Aorta (tissue), 5 donors: ENCODE measurements at regions of chr15 and their contacts with region 1.

Region 1: DNA sequence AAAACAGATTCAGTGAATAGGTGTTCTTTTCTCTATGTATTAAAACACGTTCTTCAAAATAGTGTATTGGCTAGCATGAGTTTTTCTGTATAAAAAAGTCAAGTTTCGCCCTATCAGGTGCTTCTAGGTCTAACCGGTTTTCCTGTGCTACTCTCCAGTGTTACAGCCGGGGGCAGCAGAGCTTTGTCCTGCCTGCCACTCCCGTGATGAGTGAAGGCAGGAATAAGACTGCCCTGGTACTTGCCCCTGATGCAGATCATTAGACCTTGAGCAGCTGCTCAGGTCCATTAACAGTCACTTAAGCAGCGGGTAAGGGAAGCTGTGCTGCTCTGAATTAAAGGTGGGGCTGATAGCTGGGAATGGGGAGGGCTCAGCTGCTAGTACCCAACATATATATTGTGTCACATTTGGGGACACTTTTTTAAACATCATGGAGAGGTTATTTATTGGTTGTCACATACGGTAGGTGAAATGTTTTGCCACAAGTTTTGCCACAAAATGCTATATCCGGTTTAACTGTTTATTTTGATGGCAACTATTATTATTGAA is 1.3 kb upstream of the UNC13C start:
- DNase-seq: peak; percentile 45 to 70
- ATAC-seq: peak; percentile 58
- H3K4me3 ChIP-seq: peak overlapping the region in 1 of 2 donors; percentile 79
- H3K27ac ChIP-seq: peak overlapping the region in 1 of 2 donors; percentile 7
- H3K4me1 ChIP-seq: no peaks in the 10 kb centered on the region
- H3K27me3 ChIP-seq: no peaks in the 10 kb centered on the region

Region 2: GRCh38 chr15:54017959-54018358 is 41.0 kb after region 1 on chr15:
- intact Hi-C with region 1: no loop called
- DNase-seq: no peak
- ATAC-seq: no peak
- H3K4me3 ChIP-seq: no peak overlapping the region
- H3K27ac ChIP-seq: no peak overlapping the region
- H3K4me1 ChIP-seq: no peaks in the 10 kb centered on the region
- H3K27me3 ChIP-seq: no peaks in the 10 kb centered on the region

Region 3: GRCh38 chr15:54029081-54029480 is 52.2 kb after region 1 on chr15:
- intact Hi-C with region 1: no loop called
- DNase-seq: no peak
- ATAC-seq: no peak
- H3K4me3 ChIP-seq: no peak overlapping the region
- H3K27ac ChIP-seq: no peak overlapping the region
- H3K4me1 ChIP-seq: no peaks in the 10 kb centered on the region
- H3K27me3 ChIP-seq: no peaks in the 10 kb centered on the region

Region 4: GRCh38 chr15:54502416-54503075 is 525.6 kb after region 1 on chr15:
- intact Hi-C with region 1: loop called in 1 of 2 experiments (anchors 10 kb)
- DNase-seq: no peak
- ATAC-seq: no peak
- H3K4me3 ChIP-seq: no peak overlapping the region
- H3K27ac ChIP-seq: no peak overlapping the region
- H3K4me1 ChIP-seq: no peaks in the 10 kb centered on the region
- H3K27me3 ChIP-seq: no peaks in the 10 kb centered on the region

Region 5: GRCh38 chr15:54540721-54541120 is 563.8 kb after region 1 on chr15:
- intact Hi-C with region 1: loop called in 1 of 2 experiments (anchors 5 kb)
- DNase-seq: no peak
- ATAC-seq: no peak
- H3K4me3 ChIP-seq: no peak overlapping the region
- H3K27ac ChIP-seq: no peak overlapping the region
- H3K4me1 ChIP-seq: peaks cover 0 to 2% of the 10 kb centered on the region in 2 donors
- H3K27me3 ChIP-seq: no peaks in the 10 kb centered on the region

Region 6: DNA sequence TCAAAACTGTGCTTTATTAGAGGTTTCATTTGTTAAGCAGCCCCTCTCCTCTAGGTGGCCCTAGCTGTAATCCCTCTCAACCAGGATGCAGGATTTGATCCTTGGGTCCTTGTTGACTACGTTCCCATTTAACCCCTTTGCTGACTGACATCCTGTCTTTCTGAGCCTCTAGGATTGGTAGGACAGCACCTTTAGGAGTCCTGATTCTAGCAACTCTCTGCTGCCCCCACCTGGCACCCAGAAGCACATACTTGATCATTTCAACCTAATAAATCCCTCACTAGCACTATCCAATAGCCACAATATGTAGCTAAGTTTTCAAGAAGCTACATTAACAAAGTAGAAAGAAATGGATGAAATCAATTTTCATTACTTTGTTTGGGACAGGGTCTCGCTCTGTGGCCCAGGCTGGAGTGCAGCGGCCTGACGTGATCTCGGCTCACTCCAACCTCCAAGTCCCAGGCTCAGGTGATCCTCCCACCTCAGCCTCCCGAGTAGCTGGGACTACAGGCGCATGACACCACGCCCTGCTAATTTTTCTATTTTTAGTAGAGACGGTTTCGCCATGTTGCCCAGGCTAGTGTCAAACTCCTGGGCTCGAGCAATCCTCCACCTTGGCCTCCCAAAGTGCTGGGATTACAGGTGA is 1191.5 kb after region 1 on chr15:
- intact Hi-C with region 1: loop called in 1 of 2 experiments (anchors 10 kb)
- DNase-seq: peak; percentile 71 to 83
- ATAC-seq: no peak
- H3K4me3 ChIP-seq: no peak overlapping the region
- H3K27ac ChIP-seq: no peak overlapping the region
- H3K4me1 ChIP-seq: no peaks in the 10 kb centered on the region
- H3K27me3 ChIP-seq: no peaks in the 10 kb centered on the region